ENCODE measurements at regions of chr22 and their contacts with region 1.

Region 1: GRCh38 chr22:37457093-37457893 is 28.9 kb downstream of the MFNG start:
- H3K4me3 Mint-ChIP-seq: no peak overlapping the region
- H3K27ac Mint-ChIP-seq: no peak overlapping the region
- H3K4me1 Mint-ChIP-seq: peaks cover 5% of the 10 kb centered on the region
- H3K27me3 Mint-ChIP-seq: peaks cover 42% of the 10 kb centered on the region

Region 2: DNA sequence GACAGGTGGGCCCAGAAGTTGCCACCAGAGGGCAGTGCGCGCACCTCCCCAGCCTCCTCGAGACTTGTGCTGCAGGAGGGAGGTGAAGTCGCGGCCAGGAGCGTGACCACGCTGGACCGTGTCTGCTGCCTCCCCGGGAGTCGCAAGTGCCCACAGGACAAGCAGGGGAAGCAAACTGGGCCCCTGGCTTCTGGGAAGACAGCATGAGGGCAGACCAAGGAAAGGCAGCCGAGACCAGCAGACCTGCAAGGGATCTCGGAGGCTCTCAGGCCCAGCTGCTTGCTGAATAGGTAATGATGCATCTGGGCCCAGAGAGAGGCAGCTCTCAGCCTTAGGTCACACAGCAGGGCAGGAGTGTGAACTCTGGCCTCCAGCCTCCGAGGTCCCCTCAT is 290.6 kb before region 1 on chr22:
- intact Hi-C with region 1: loop called (anchors 5 kb)
- H3K4me3 Mint-ChIP-seq: no peak overlapping the region
- H3K27ac Mint-ChIP-seq: no peak overlapping the region
- H3K4me1 Mint-ChIP-seq: peaks cover 6% of the 10 kb centered on the region
- H3K27me3 Mint-ChIP-seq: peaks cover 37% of the 10 kb centered on the region

Region 3: DNA sequence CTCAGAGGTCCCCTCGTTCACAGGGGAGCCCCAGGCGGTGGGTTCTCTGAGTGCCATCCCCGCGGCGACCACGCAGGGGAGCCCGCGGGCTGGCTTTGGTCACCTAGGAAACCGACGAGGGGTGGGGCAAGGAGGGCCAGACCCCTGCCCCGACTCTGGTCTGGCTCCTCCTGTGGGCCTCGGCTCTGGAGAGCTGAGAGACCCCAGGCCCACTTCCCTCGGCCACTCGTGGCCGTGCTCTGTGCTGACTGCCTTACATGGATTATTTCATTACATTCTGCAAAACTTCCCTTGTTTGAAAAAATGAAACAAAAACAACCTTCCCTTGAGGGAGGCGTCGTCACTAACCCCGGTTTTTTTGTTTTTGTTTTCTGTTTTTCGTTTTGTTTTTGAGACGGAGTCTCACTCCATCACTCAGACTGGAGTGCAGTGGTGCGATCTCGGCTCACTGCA is 190.1 kb before region 1 on chr22:
- intact Hi-C with region 1: loop called (anchors 10 kb)
- H3K4me3 Mint-ChIP-seq: peak overlapping the region; percentile 70
- H3K27ac Mint-ChIP-seq: peak overlapping the region; percentile 91
- H3K4me1 Mint-ChIP-seq: peaks cover 61% of the 10 kb centered on the region
- H3K27me3 Mint-ChIP-seq: peaks cover 9% of the 10 kb centered on the region

Region 4: DNA sequence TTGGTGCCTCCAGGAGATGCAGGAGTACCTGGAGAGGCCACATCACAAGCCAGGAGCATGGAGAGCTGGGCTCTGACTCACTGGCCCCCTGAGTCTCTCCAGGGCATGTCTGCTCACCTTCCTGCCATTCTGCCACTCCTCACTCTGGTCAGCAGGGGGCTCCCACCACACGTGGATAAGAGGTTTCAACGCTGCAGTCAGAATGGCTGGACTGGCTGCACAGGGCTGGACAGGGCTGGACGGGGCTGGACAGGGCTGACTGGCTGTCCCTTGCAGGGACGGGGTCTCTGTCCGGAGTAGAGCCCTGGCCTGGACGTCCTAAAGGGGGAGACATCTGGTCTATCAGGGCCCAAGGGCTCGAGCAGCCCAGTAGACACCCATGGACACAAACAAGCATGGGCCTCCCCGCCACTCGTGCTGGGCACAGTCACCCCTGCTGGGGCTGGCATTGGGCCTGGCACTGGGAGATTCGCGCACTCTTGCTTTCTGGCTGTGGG is 140.4 kb before region 1 on chr22:
- intact Hi-C with region 1: loop called (anchors 1 kb)
- H3K4me3 Mint-ChIP-seq: no peak overlapping the region
- H3K27ac Mint-ChIP-seq: no peak overlapping the region
- H3K4me1 Mint-ChIP-seq: peaks cover 47% of the 10 kb centered on the region
- H3K27me3 Mint-ChIP-seq: peaks cover 21% of the 10 kb centered on the region

Measured in dendritic cell treated with granulocyte-macrophage colony-stimulating factor and Interleukin-4, amounts not matched to agents 40 ng/mL and 50 ng/mL, for 4 days (primary cell).